ENCODE measurements at regions of chr7 and their contacts with region 1.

Region 1: DNA sequence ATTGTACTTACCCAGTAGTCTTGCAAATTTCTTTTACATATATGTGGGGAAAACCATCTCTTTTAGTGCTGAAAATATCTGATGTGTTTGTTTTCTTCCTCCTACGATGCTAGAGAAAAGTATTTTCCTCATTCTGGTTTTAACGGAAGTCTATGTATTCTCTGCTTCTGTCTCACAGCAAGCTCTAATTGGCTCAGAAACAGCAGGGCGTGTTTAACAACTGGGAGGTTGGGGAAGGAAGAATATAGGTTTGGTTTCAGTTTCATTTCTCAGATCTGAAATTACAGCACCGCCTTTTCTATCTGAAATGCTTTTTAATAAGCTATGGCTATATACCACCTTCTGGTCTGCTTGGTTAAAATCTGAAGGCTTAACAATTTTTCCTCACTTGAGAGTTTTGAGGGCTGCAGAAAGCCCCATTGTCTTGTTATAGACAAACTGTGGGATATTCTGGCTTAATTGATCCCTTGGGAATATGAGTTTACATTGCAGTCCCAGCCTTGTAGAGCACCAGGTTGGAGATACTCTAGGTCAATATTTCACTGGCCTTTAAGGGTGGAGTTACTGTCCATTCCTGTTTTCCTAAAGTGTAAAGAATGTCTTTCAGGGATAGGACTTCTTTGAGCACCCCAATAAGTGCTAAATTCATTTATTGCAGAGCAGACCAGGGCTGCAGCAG is at the start of gene SAMD9:
- DNase-seq: peak; percentile 58
- H3K4me3 Mint-ChIP-seq: peak within 1 kb of the TSS; percentile 85
- H3K27ac Mint-ChIP-seq: peak within 1 kb of the TSS; percentile 90
- H3K4me1 Mint-ChIP-seq: peaks cover 38% of the 10 kb centered on the region
- H3K27me3 Mint-ChIP-seq: no peaks in the 10 kb centered on the region
- total RNA-seq, gene SAMD9: 9.3 and 9.4 TPM in 2 replicates

Region 2: DNA sequence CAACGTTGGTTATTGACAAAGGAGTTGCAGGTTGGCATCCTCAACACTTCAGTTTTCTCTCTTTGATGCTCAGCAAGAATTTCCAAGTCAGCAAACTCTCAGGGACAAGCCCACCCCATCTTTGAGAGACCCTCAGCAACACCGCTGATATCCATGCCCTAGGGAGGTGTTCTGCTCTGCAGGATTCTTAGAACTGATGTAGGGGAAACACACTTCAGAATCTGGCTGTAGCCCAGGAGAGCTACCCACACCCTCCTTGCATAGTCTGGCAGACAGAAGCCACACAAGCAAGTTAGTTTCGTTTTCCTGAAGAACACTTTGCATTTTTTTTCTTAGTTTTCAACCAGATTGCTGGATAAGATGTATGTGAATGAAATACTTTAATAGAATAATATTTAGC is 29.4 kb after region 1 on chr7:
- intact Hi-C with region 1: loop called (anchors 1 kb)
- DNase-seq: peak; percentile 22
- H3K4me3 Mint-ChIP-seq: peak overlapping the region; percentile 87
- H3K27ac Mint-ChIP-seq: peak overlapping the region; percentile 89
- H3K4me1 Mint-ChIP-seq: peaks cover 36% of the 10 kb centered on the region
- H3K27me3 Mint-ChIP-seq: no peaks in the 10 kb centered on the region

Measured in activated T-helper 2 cell treated with anti-CD3 and anti-CD28 coated beads, Interferon-gamma antibody, Interleukin-2, Interleukin-4, amounts not matched to agents 10 μg/mL and 5 μg/mL and 100 μg/mL, durations not matched to agents 14 hours and 24 hours and 36 hours (primary cell).